ENCODE measurements at regions of chr11 and their contacts with region 1.

Region 1: GRCh38 chr11:68383976-68384501 is 71.6 kb downstream of the LRP5 start:
- DNase-seq: peak; percentile 83
- H3K4me3 ChIP-seq: no peak overlapping the region
- H3K27ac ChIP-seq: peak overlapping the region; percentile 69 to 83 (median 82)
- H3K4me1 ChIP-seq: peaks cover 0 to 54% (median 52%) of the 10 kb centered on the region in 4 donors
- H3K27me3 ChIP-seq: no peaks in the 10 kb centered on the region
- CTCF ChIP-seq: peak; percentile 89 to 97 (median 96)
- EP300 ChIP-seq: no peak
- POLR2A ChIP-seq: no peak

Region 2: GRCh38 chr11:68213555-68214174 is 170.4 kb before region 1 on chr11:
- intact Hi-C with region 1: loop called (anchors 5 kb)
- DNase-seq: peak; percentile 96
- H3K4me3 ChIP-seq: peak overlapping the region; percentile 64 to 94 (median 76)
- H3K27ac ChIP-seq: peak overlapping the region; percentile 97 to 99 (median 98)
- H3K4me1 ChIP-seq: peaks cover 0 to 44% (median 41%) of the 10 kb centered on the region in 4 donors
- H3K27me3 ChIP-seq: no peaks in the 10 kb centered on the region
- CTCF ChIP-seq: peak in 1 of 4 experiments; percentile 4
- EP300 ChIP-seq: no peak
- POLR2A ChIP-seq: peak; percentile 92 to 94

Region 3: GRCh38 chr11:68257475-68258362 is 126.3 kb before region 1 on chr11:
- intact Hi-C with region 1: loop called (anchors 5 kb)
- DNase-seq: peak; percentile 98
- H3K4me3 ChIP-seq: peak overlapping the region in 2 of 4 donors; percentile 28 to 31
- H3K27ac ChIP-seq: peak overlapping the region in 3 of 4 donors; percentile 21 to 54 (median 34)
- H3K4me1 ChIP-seq: peaks cover 0 to 19% (median 11%) of the 10 kb centered on the region in 4 donors
- H3K27me3 ChIP-seq: no peaks in the 10 kb centered on the region
- CTCF ChIP-seq: peak; percentile 87 to 92 (median 90)
- EP300 ChIP-seq: no peak
- POLR2A ChIP-seq: no peak

Region 4: GRCh38 chr11:68271781-68272608 is 112.0 kb before region 1 on chr11 and contains the start of gene C11orf24:
- intact Hi-C with region 1: loop called (anchors 2 kb)
- DNase-seq: peak; percentile 98
- H3K4me3 ChIP-seq: peak within 1 kb of the TSS; percentile 63 to 83 (median 72)
- H3K27ac ChIP-seq: peak within 1 kb of the TSS; percentile 93 to 97 (median 94)
- H3K4me1 ChIP-seq: peaks cover 0 to 37% (median 32%) of the 10 kb centered on the region in 4 donors
- H3K27me3 ChIP-seq: no peaks in the 10 kb centered on the region
- CTCF ChIP-seq: peak in 2 of 4 experiments; percentile 13
- EP300 ChIP-seq: no peak
- POLR2A ChIP-seq: peak; percentile 47 to 59
- total RNA-seq, gene C11orf24: 13.7 to 25.4 (median 21.9) TPM

Region 5: DNA sequence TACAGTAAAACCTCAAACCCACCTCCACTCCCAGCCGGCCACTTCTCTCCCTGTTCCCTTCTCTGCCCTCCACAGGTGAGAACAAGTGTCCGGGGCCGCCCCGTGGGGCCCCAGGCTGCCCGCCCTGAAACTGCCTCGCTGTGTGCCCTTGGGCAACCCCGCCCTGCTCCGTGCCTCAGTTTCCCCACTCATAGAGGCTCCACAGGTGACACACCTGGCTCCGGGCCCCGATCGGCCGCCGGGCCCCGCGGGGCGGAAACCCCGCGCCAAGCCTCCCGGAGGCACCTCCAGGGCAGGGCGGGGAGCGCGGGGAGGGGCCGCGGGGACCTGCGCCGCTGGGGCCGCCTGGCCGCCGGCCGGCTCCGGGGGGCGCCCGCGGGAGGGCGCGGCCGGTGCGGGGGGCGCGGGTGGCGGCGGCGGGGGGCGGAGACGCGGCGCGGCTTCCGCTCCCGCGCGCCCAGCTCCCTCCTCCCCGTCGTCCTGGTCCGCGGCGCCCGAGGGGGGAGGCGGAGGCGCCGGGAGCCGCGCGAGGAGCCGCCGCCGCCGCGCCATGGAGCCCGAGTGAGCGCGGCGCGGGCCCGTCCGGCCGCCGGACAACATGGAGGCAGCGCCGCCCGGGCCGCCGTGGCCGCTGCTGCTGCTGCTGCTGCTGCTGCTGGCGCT is 71.8 kb before region 1 on chr11 and contains the start of gene LRP5:
- intact Hi-C with region 1: loop called (anchors 5 kb)
- DNase-seq: peak; percentile 69
- H3K4me3 ChIP-seq: peak within 1 kb of the TSS; percentile 65 to 82 (median 76)
- H3K27ac ChIP-seq: peak within 1 kb of the TSS; percentile 78 to 92 (median 88)
- H3K4me1 ChIP-seq: peaks cover 0 to 46% (median 41%) of the 10 kb centered on the region in 4 donors
- H3K27me3 ChIP-seq: no peaks in the 10 kb centered on the region
- CTCF ChIP-seq: no peak
- EP300 ChIP-seq: no peak
- POLR2A ChIP-seq: no peak
- total RNA-seq, gene LRP5: 18.3 to 43.8 (median 29.2) TPM

Region 6: GRCh38 chr11:68447015-68447801 is 63.2 kb after region 1 on chr11:
- intact Hi-C with region 1: loop called (anchors 10 kb)
- DNase-seq: peak; percentile 90
- H3K4me3 ChIP-seq: no peak overlapping the region
- H3K27ac ChIP-seq: peak overlapping the region in 3 of 4 donors; percentile 22 to 34 (median 25)
- H3K4me1 ChIP-seq: peaks cover 0 to 24% (median 13%) of the 10 kb centered on the region in 4 donors
- H3K27me3 ChIP-seq: no peaks in the 10 kb centered on the region
- CTCF ChIP-seq: peak; percentile 75 to 96 (median 93)
- EP300 ChIP-seq: no peak
- POLR2A ChIP-seq: no peak

Measured in sigmoid colon (tissue), 7 donors.